PC-3 (cell line): ENCODE measurements at regions of chr12 and their contacts with region 1.

Region 1: DNA sequence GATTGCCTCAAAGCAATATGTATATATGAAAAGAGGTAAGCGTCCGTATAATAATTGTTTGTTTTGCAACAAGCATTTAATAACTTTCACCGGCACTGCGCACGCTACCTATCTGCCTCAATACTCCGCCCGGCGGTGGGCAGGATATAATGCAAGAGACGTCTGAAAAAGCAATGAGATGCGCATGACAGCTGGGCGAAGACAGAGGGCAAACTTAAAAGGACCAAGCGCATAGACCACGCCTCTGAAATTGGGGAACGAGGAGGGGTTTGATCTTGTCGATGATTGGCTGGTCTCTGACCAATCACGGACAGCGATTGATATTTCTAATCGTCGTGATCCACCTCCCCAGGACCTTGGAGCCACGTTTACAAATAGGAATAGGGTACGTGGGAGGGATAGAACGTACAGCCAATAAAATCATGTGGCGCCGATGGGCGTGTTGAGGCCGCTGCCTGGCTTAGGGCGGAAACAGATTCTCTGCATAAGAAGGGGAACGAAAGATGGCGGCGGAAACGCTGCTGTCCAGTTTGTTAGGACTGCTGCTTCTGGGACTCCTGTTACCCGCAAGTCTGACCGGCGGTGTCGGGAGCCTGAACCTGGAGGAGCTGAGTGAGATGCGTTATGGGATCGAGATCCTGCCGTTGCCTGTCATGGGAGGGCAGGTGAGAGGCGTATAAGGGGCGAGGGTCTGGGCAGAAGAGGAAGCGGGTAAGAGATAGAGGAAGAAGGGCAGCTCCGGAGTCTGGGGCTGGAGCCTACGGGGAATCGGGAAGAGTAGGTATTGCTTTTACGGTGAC is at the start of gene OS9:
- DNase-seq: peak; percentile 99
- ATAC-seq: peak; percentile 98
- H3K4me3 ChIP-seq: peak within 1 kb of the TSS; percentile 97
- H3K27ac ChIP-seq: no peak within 1 kb of the TSS
- H3K4me1 ChIP-seq: peaks cover 12% of the 10 kb centered on the region
- H3K27me3 ChIP-seq: no peaks in the 10 kb centered on the region
- CTCF ChIP-seq: peak; percentile 74
- total RNA-seq, gene OS9: 145 and 223 TPM in 2 replicates

Region 2: GRCh38 chr12:57632694-57633477 is 61.0 kb before region 1 on chr12 and contains the start of gene B4GALNT1:
- CTCF ChIA-PET with region 1: no interaction called
- POLR2A ChIA-PET with region 1: no interaction called
- intact Hi-C with region 1: loop called (anchors 1 kb)
- DNase-seq: peak; percentile 79
- ATAC-seq: peak; percentile 86
- H3K4me3 ChIP-seq: peak within 1 kb of the TSS; percentile 97
- H3K27ac ChIP-seq: no peak within 1 kb of the TSS
- H3K4me1 ChIP-seq: peaks cover 17% of the 10 kb centered on the region
- H3K27me3 ChIP-seq: no peaks in the 10 kb centered on the region
- CTCF ChIP-seq: peak; percentile 84
- total RNA-seq, gene B4GALNT1: 39.0 and 42.3 TPM in 2 replicates